ENCODE measurements at regions of chr1 and their contacts with region 1.

Region 1: GRCh38 chr1:184801503-184801902 is 46.8 kb upstream of the EDEM3 start:
- DNase-seq: peak; percentile 12
- H3K4me3 ChIP-seq: no peak overlapping the region
- H3K27ac ChIP-seq: no peak overlapping the region
- H3K4me1 ChIP-seq: no peaks in the 10 kb centered on the region
- H3K27me3 ChIP-seq: no peaks in the 10 kb centered on the region
- CTCF ChIP-seq: no peak
- POLR2A ChIP-seq: no peak

Region 2: GRCh38 chr1:184684285-184685074 is 117.0 kb before region 1 on chr1:
- intact Hi-C with region 1: no loop called
- DNase-seq: peak; percentile 56 to 67
- H3K4me3 ChIP-seq: no peak overlapping the region
- H3K27ac ChIP-seq: no peak overlapping the region
- H3K4me1 ChIP-seq: no peaks in the 10 kb centered on the region
- H3K27me3 ChIP-seq: no peaks in the 10 kb centered on the region
- CTCF ChIP-seq: no peak
- POLR2A ChIP-seq: no peak

Region 3: DNA sequence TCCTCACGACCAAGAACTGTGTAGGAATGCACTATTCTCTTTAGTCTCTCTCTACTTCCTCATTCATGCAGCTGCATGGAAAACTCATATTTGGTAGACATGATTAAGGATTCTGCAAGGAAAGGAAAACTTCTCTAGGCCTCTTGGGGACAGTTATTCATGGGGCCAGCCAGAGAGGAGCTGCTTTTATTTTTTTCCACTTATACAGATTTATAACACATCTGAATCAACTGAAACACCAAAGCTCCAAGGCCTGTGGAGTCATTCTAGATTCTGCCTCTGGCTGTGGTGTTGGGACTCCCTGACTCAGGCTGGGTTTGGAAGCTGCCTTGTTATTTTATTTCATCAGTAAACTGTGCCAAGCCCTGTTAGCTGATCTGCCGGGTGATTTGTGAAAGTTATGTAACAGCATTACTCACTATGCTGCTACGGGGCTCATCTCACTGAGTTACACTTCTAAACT is 37.0 kb after region 1 on chr1:
- intact Hi-C with region 1: no loop called
- DNase-seq: peak; percentile 33 to 57
- H3K4me3 ChIP-seq: no peak overlapping the region
- H3K27ac ChIP-seq: peak overlapping the region in 1 of 3 donors; percentile 25
- H3K4me1 ChIP-seq: peaks cover 9 to 21% of the 10 kb centered on the region in 2 donors
- H3K27me3 ChIP-seq: no peaks in the 10 kb centered on the region
- CTCF ChIP-seq: no peak
- POLR2A ChIP-seq: no peak

Region 4: DNA sequence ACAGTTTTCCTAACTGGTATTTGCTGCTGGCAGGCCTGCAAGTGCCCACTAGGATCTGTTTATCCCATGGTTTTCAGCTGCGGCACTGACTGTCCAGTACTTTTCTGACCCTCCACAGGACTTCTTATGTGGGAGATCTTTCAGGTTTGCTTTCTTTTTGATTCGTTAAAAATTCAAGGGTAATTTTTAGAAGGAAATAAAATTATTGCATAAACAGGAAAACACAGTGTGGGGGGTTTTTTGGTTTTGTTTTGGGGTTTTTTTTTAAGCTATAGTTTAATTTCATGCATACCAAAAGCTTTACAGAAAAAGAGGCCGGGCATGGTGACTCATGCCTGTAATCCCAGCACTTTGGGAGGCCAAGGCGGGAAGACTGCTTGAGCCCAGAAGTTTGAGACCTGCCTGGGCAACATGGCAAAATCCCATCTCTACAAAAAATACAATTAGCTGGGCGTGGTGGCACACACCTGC is 169.2 kb after region 1 on chr1:
- intact Hi-C with region 1: no loop called
- DNase-seq: no peak
- H3K4me3 ChIP-seq: no peak overlapping the region
- H3K27ac ChIP-seq: no peak overlapping the region
- H3K4me1 ChIP-seq: peaks cover 0 to 11% of the 10 kb centered on the region in 2 donors
- H3K27me3 ChIP-seq: peaks cover 4% of the 10 kb centered on the region
- CTCF ChIP-seq: no peak
- POLR2A ChIP-seq: no peak

Region 5: GRCh38 chr1:184982002-184982954 is 180.8 kb after region 1 on chr1:
- intact Hi-C with region 1: loop called (anchors 5 kb)
- DNase-seq: peak; percentile 75 to 76
- H3K4me3 ChIP-seq: no peak overlapping the region
- H3K27ac ChIP-seq: no peak overlapping the region
- H3K4me1 ChIP-seq: no peaks in the 10 kb centered on the region
- H3K27me3 ChIP-seq: no peaks in the 10 kb centered on the region
- CTCF ChIP-seq: peak; percentile 41 to 88 (median 81)
- POLR2A ChIP-seq: no peak